ENCODE measurements at regions of chr19 and their contacts with region 1.

Region 1: DNA sequence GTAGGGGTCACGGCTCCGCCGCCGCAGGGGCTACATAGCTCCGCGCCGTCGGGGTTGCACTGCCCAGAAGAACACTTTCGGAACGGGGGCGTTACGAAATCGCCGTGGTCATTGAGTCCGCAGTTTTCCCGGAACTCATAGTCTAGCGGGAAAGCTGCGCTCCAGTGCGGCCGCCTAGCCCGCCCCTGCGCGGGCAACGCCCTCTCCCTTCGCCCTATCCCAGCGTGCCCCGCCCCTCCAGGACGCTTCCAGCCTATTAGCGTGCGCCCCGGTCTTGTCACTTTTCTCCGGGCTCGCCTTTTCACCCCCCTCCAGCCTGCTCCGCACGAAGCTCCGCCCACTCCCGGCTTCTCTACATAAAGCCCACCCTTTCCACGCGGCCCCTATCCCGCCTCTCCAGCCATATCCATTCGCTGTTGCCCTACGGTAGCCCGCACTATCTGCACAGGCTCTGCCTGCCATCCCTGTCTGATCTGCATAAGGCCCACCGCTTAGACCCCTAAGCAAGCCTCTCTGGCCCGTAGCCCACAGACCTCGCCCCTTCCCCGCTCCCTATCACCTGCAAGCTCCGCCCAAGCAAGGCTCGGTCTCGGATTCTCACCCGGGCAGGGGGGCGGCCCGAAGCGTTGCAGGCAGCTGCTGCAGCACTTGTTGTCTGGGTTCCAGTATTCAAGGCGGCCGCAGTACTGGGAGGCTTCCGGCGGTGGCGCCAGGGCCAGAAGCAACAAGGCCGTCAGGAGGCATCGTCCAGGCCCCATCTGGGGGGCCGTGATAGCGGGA is 1.6 kb downstream of the IGFLR1 start:
- DNase-seq: peak; percentile 97
- H3K4me3 ChIP-seq: peak overlapping the region; percentile 69
- H3K27ac ChIP-seq: peak overlapping the region; percentile 86
- H3K4me1 ChIP-seq: peaks cover 52% of the 10 kb centered on the region
- CTCF ChIP-seq: peak; percentile 61

Region 2: GRCh38 chr19:34428549-34429285 is 1311.9 kb before region 1 on chr19:
- CTCF ChIA-PET with region 1: no interaction called
- POLR2A ChIA-PET with region 1: no interaction called
- intact Hi-C with region 1: loop called (anchors 10 kb)
- DNase-seq: peak; percentile 43
- H3K4me3 ChIP-seq: peak overlapping the region; percentile 88
- H3K27ac ChIP-seq: peak overlapping the region; percentile 65
- H3K4me1 ChIP-seq: peaks cover 28% of the 10 kb centered on the region
- CTCF ChIP-seq: no peak

Region 3: DNA sequence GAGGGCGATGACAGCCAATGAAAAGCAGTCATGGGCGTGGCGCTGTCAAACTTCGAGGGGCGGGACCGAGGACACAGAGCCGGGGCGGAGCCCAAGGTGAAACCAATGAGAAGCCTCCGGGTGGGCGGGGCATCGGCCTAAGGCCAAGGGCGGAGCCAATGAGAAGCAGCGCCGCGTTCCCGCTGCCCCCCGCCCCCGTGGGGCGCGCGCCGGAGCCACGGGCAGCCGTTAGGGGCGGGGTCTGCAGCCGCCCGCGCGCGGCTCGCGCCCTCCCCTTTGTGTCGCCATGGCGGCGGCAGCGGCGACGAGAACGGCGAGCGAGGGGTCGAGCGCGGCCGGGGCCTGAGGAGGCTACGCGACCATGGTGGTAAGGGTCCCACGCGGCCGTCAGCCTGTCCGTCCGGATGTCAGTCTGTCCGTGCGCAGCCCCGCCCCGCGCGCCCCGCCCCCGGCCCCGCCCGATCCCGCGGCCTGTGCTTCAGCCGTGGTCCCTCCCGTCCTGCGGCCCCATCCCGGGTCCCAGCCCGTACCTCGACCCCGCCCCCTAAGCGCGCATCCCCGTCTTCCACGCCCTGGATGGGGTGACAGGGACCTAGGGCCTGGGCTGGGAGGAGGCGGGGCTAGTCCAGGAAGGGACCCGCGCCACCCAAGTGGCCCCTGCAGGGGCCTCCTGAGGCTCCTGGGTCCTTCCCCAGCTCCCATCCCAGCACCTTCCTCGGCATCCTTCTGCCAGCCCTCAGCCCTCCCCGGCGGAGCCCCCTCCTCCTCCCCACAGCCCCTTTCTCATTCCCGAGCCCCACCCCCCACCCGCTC is 34.9 kb after region 1 on chr19 and contains the start of gene ARHGAP33:
- CTCF ChIA-PET with region 1: no interaction called
- POLR2A ChIA-PET with region 1: interaction called, 9 read pairs
- intact Hi-C with region 1: loop called (anchors 1 kb)
- DNase-seq: peak; percentile 100
- H3K4me3 ChIP-seq: peak within 1 kb of the TSS; percentile 80
- H3K27ac ChIP-seq: peak within 1 kb of the TSS; percentile 29
- H3K4me1 ChIP-seq: peaks cover 19% of the 10 kb centered on the region
- CTCF ChIP-seq: no peak
- total RNA-seq, gene ARHGAP33: 15.1 and 21.3 TPM in 2 replicates

Region 4: DNA sequence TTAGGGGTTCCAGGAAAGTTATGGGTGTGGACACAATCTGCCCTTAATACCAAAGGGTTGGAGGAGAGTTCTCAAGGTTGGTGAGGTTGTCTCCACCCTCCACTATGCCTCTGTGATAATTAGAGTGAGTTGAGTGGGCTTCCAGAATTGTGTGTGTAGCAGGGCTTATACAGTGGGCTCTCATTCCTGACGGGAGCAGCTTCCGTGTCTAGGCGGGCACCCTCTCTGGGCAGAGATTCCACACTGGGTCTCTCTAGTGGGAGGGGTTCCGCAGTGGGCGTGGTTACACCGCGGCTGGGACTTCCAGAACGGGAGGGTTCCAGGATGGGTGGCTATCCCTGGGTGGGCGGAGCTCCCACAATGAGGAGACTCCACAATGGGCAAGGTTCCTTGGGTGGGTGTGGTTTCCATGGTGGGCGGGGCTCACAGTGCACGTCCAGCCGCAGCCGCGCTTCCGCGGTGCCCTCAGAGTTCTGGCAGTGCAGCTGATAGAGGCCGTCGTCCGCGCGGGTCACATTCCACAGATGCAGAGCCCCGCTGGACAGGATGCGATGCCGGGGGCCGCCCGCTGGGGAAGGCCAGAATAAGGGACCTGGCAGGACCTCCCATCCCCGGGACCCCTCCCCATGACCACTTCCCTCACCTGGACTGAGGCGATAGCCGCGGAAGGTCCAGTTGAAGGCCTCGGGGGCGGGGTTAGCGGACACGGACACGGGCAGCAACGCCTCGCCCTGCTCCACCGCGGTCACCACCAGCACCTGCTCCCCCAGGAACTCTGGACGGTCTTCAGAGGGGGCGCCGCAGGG is 103.3 kb after region 1 on chr19:
- CTCF ChIA-PET with region 1: no interaction called
- POLR2A ChIA-PET with region 1: no interaction called
- intact Hi-C with region 1: no loop called
- DNase-seq: no peak
- H3K4me3 ChIP-seq: no peak overlapping the region
- H3K27ac ChIP-seq: no peak overlapping the region
- H3K4me1 ChIP-seq: no peaks in the 10 kb centered on the region
- CTCF ChIP-seq: no peak